ENCODE measurements at regions of chr7 and their contacts with region 1.

Region 1: DNA sequence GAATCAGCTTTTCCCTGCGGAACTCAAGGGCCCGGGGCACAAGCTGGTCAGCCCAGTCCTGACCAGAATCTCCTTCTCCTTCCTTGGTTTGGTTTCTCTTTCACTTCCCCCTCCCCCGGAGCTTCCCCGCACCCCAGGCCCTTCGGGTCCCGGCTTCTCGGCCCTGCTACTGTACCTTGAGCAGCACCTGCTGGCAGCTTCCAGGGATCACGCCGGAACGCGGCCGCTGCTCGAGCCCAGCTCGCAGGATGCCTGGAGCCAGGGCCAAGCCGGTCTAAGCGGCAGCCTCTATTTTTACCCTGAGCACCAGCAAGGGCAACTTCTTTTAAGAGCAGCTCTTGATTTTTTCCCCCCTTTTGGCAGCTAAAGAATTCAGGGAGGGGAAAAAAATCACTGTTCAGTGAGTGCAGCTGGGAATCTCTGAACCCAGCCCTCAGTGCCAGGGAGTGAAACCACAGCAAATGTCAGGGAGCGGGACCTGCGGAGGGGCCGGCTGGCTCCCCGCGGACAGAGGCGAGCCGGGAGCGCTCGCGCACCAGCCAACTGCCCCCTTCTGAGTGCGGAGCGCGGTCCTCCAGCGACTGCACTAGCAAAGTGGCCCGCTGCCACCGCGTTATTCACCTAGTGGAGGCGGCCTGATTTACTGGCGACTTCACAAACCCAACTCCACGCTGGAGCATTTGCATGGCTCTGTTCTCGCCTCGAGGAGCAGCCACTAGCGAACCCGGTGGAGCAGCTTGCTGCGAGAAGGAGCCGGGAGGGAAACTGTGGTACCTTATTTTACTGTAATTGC is 2.4 kb upstream of the INHBA start:
- DNase-seq: peak; percentile 87
- H3K4me3 ChIP-seq: peak overlapping the region; percentile 49
- H3K27ac ChIP-seq: peak overlapping the region; percentile 59
- H3K4me1 ChIP-seq: peaks cover 6% of the 10 kb centered on the region
- H3K27me3 ChIP-seq: no peaks in the 10 kb centered on the region
- CTCF ChIP-seq: peak; percentile 64

Region 2: GRCh38 chr7:41003031-41003925 is 702.0 kb before region 1 on chr7:
- intact Hi-C with region 1: loop called (anchors 10 kb)
- DNase-seq: peak; percentile 47
- H3K4me3 ChIP-seq: no peak overlapping the region
- H3K27ac ChIP-seq: no peak overlapping the region
- H3K4me1 ChIP-seq: no peaks in the 10 kb centered on the region
- H3K27me3 ChIP-seq: no peaks in the 10 kb centered on the region
- CTCF ChIP-seq: peak; percentile 73

Region 3: GRCh38 chr7:41630741-41631140 is 74.6 kb before region 1 on chr7:
- intact Hi-C with region 1: no loop called
- DNase-seq: no peak
- H3K4me3 ChIP-seq: no peak overlapping the region
- H3K27ac ChIP-seq: no peak overlapping the region
- H3K4me1 ChIP-seq: no peaks in the 10 kb centered on the region
- H3K27me3 ChIP-seq: no peaks in the 10 kb centered on the region
- CTCF ChIP-seq: no peak